ENCODE measurements at regions of chr14 and their contacts with region 1.

Region 1: DNA sequence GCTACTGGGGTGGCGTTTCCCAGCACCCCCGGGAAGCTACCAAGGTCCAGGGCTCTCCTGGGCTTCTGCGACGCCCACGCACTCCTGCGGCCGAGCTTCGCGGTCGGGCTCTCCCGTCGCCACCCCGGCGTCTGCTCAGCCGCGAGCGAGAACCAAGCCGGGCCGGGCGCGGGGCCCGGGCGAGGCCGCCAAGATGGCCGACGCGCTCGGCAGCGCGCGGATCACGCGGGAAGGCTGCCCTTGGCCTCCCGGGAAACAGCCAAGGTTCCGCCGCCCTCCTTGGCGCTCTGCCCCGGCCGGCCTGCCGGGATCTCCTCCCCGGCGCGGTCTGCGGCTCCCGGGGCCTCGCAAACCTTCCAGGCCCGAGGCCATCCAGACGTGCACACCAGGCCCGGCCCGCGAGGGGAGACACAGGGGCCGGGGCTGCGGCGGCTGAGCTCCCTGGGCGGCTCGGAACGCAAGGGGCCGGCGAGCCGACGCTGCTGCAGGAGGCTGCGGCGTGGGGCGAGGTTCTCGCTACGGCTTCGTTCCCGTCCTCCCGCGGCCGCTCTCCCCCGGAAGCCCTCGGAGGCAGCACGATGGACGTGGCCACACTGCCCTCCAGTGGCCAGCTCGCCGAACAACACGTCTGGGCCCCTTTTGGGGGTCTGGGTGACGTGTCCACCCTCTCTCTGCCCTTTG is 23.5 kb upstream of the ZFP36L1 start:
- DNase-seq: peak; percentile 82 to 97 (median 91)
- ATAC-seq: peak; percentile 76
- H3K4me3 ChIP-seq: peak overlapping the region; percentile 59 to 69
- H3K4me3 Mint-ChIP-seq: peak overlapping the region; percentile 79
- H3K27ac ChIP-seq: peak overlapping the region; percentile 77 to 91
- H3K27ac Mint-ChIP-seq: peak overlapping the region; percentile 98
- H3K4me1 ChIP-seq: peaks cover 66% of the 10 kb centered on the region
- H3K4me1 Mint-ChIP-seq: peaks cover 68% of the 10 kb centered on the region
- H3K27me3 ChIP-seq: no peaks in the 10 kb centered on the region
- H3K27me3 Mint-ChIP-seq: no peaks in the 10 kb centered on the region
- CTCF ChIP-seq: peak; percentile 95

Region 2: DNA sequence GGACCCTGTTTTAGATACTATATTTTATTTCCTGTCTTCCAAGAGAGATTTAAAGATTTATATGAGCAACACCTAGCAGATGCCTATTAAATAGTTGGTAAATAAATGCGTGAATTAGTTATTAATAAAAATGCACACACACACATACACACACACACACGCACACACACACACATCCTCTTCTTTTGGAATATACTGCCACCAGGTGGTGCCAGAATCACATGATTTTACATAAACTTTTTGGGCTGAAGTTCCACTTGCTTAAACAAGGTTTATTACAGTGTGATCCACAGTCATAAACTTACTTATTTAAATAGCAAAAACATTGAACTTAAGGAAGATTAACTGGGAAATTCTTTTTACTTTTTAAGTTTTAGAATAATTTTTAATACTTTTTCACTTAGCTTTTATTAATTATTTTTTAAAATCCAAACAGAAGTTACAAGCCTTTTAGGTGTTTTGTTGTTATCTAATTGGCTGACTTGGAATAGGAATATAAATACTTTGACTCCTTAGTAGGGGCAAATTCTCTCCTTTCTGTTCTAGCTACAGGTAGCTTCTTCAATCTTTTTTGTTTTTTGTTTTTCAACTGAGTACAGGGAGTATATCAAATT is 979.3 kb before region 1 on chr14:
- CTCF ChIA-PET with region 1: interaction called, 9 read pairs
- POLR2A ChIA-PET with region 1: interaction called, 3 read pairs
- intact Hi-C with region 1: loop called (anchors 1 kb)
- DNase-seq: peak in 7 of 9 experiments; percentile 41 to 85 (median 60)
- ATAC-seq: peak; percentile 62
- H3K4me3 ChIP-seq: no peak overlapping the region
- H3K4me3 Mint-ChIP-seq: no peak overlapping the region
- H3K27ac ChIP-seq: no peak overlapping the region
- H3K27ac Mint-ChIP-seq: no peak overlapping the region
- H3K4me1 ChIP-seq: no peaks in the 10 kb centered on the region
- H3K4me1 Mint-ChIP-seq: peaks cover 5% of the 10 kb centered on the region
- H3K27me3 ChIP-seq: no peaks in the 10 kb centered on the region
- H3K27me3 Mint-ChIP-seq: no peaks in the 10 kb centered on the region
- CTCF ChIP-seq: peak; percentile 69

Region 3: DNA sequence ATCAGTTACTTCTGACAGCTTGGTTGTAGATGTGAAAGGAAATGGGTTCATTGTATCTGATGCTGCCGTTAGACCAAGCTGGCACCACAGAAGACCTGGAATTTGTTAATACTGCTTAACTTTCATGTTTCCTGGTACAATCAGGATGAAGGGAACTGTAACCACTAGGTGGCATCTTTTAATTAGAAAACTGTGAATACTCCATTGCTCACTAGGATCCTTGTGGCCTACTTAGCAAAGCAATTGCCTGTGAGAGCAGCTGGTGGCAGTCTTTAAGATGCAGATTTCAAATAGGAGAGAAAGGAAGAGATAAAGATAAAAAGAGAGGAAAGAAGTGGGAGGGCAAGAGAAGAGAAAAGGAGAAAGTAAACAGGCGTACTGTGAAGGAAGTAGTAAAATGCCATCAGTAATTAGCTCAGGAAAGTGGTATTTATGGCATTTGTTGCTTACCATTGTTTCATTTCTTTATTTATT is 882.4 kb before region 1 on chr14:
- CTCF ChIA-PET with region 1: interaction called, 40 read pairs
- POLR2A ChIA-PET with region 1: interaction called, 4 read pairs
- intact Hi-C with region 1: loop called in 1 of 2 experiments (anchors 1 kb)
- DNase-seq: peak in 2 of 9 experiments; percentile 48 to 67
- ATAC-seq: peak; percentile 57
- H3K4me3 ChIP-seq: no peak overlapping the region
- H3K4me3 Mint-ChIP-seq: no peak overlapping the region
- H3K27ac ChIP-seq: no peak overlapping the region
- H3K27ac Mint-ChIP-seq: no peak overlapping the region
- H3K4me1 ChIP-seq: peaks cover 5% of the 10 kb centered on the region
- H3K4me1 Mint-ChIP-seq: peaks cover 7% of the 10 kb centered on the region
- H3K27me3 ChIP-seq: no peaks in the 10 kb centered on the region
- H3K27me3 Mint-ChIP-seq: no peaks in the 10 kb centered on the region
- CTCF ChIP-seq: peak; percentile 63

Region 4: GRCh38 chr14:68283378-68284123 is 532.9 kb before region 1 on chr14:
- CTCF ChIA-PET with region 1: interaction called, 7 read pairs
- POLR2A ChIA-PET with region 1: interaction called, 19 read pairs
- intact Hi-C with region 1: no loop called
- DNase-seq: peak; percentile 32 to 87 (median 72)
- ATAC-seq: peak; percentile 69
- H3K4me3 ChIP-seq: peak overlapping the region in 1 of 2 experiments; percentile 6
- H3K4me3 Mint-ChIP-seq: peak overlapping the region; percentile 62
- H3K27ac ChIP-seq: peak overlapping the region; percentile 57 to 89
- H3K27ac Mint-ChIP-seq: peak overlapping the region; percentile 98
- H3K4me1 ChIP-seq: peaks cover 71% of the 10 kb centered on the region
- H3K4me1 Mint-ChIP-seq: peaks cover 85% of the 10 kb centered on the region
- H3K27me3 ChIP-seq: no peaks in the 10 kb centered on the region
- H3K27me3 Mint-ChIP-seq: no peaks in the 10 kb centered on the region
- CTCF ChIP-seq: no peak

Region 5: GRCh38 chr14:68408680-68409079 is 407.7 kb before region 1 on chr14:
- CTCF ChIA-PET with region 1: interaction called, 15 read pairs
- POLR2A ChIA-PET with region 1: interaction called, 5 read pairs
- intact Hi-C with region 1: no loop called
- DNase-seq: peak in 2 of 9 experiments; percentile 41 to 64
- ATAC-seq: peak; percentile 49
- H3K4me3 ChIP-seq: no peak overlapping the region
- H3K4me3 Mint-ChIP-seq: no peak overlapping the region
- H3K27ac ChIP-seq: no peak overlapping the region
- H3K27ac Mint-ChIP-seq: peak overlapping the region; percentile 4
- H3K4me1 ChIP-seq: peaks cover 25% of the 10 kb centered on the region
- H3K4me1 Mint-ChIP-seq: peaks cover 38% of the 10 kb centered on the region
- H3K27me3 ChIP-seq: no peaks in the 10 kb centered on the region
- H3K27me3 Mint-ChIP-seq: no peaks in the 10 kb centered on the region
- CTCF ChIP-seq: no peak

Region 6: DNA sequence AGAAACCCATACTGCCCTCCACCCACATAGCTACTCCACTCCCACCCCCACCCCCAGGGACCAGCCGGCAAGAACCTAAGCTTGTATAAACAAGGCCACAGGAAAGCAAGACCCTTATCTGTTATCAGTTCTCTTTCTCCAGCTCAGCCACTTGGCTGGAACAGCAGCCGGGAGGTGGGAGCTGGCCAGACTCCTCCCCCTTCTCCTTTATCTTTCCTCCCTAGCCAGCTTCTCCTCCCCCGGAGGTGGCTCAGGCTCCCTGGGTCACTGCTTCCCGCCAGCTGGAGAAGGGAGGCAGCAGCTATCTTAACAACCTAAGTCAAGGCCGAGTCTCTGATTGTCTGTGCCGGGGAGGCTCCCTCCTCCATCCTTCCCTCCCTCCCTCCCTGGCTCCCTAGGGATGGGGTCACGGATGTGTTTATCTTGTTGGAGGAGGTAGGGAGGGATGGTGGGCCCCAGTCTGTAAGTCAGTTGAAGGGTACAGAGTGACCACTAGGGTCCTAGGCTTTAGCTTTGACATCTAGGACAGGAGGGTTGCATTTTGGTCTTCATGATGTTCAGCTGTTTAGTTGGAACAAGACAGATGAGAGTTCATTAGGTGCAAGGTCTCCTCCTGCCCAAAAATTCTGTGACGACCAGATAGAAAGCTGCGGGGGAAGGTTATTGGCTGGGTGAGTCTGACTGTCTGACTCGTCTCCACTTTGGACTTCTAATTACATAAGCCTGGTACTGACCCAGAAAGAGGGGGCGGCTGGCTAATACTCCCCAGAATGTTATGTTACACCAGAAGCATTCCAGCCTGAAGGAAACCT is 53.2 kb before region 1 on chr14:
- CTCF ChIA-PET with region 1: no interaction called
- POLR2A ChIA-PET with region 1: no interaction called
- intact Hi-C with region 1: no loop called
- DNase-seq: no peak
- ATAC-seq: no peak
- H3K4me3 ChIP-seq: no peak overlapping the region
- H3K4me3 Mint-ChIP-seq: no peak overlapping the region
- H3K27ac ChIP-seq: no peak overlapping the region
- H3K27ac Mint-ChIP-seq: no peak overlapping the region
- H3K4me1 ChIP-seq: peaks cover 3% of the 10 kb centered on the region
- H3K4me1 Mint-ChIP-seq: peaks cover 20% of the 10 kb centered on the region
- H3K27me3 ChIP-seq: no peaks in the 10 kb centered on the region
- H3K27me3 Mint-ChIP-seq: no peaks in the 10 kb centered on the region
- CTCF ChIP-seq: no peak

Region 7: DNA sequence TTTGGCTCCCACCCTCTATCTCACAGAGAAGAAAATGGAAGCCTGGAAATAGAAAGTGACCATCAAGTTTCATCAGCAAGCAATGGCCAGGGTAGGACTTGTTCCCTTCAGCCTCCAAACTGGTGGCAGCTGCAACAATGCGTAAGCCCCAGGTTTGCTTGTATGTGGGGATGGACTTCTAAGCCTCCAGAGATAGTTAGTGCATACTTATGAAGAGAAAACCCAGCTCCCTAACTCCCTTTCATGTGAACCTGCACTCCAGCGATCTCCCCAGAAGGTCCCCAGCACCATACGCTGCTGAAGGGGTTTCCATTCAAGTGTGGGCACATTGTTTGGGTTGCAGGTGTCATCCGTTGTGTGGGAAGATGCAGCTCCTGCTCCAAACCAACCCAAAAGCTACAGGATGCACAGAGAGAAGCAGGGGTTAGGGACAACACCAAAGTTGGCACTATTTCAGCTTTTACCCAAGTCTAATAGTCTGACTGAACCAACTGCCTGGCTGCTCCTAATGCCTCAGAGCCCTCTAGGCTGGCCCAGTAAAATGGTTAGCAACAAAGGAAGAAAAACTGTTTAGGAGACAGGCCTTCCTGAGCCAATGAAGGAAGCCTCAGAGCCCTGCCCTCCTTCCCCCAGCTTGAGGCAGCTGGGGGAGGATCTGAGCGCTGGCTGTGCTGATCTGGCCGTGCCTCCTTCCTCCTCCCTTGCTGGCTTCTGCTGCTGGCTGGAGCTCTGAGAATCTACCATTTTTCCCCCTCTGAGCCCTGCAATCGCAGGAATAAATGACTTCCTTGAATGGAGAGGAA is 35.8 kb before region 1 on chr14:
- CTCF ChIA-PET with region 1: interaction called, 384 read pairs
- POLR2A ChIA-PET with region 1: interaction called, 641 read pairs
- intact Hi-C with region 1: no loop called
- DNase-seq: peak in 5 of 9 experiments; percentile 36 to 72 (median 58)
- ATAC-seq: peak; percentile 11
- H3K4me3 ChIP-seq: peak overlapping the region; percentile 29 to 41
- H3K4me3 Mint-ChIP-seq: peak overlapping the region; percentile 83
- H3K27ac ChIP-seq: peak overlapping the region; percentile 47 to 86
- H3K27ac Mint-ChIP-seq: peak overlapping the region; percentile 96
- H3K4me1 ChIP-seq: peaks cover 82% of the 10 kb centered on the region
- H3K4me1 Mint-ChIP-seq: peaks cover 84% of the 10 kb centered on the region
- H3K27me3 ChIP-seq: no peaks in the 10 kb centered on the region
- H3K27me3 Mint-ChIP-seq: no peaks in the 10 kb centered on the region
- CTCF ChIP-seq: no peak

Region 8: DNA sequence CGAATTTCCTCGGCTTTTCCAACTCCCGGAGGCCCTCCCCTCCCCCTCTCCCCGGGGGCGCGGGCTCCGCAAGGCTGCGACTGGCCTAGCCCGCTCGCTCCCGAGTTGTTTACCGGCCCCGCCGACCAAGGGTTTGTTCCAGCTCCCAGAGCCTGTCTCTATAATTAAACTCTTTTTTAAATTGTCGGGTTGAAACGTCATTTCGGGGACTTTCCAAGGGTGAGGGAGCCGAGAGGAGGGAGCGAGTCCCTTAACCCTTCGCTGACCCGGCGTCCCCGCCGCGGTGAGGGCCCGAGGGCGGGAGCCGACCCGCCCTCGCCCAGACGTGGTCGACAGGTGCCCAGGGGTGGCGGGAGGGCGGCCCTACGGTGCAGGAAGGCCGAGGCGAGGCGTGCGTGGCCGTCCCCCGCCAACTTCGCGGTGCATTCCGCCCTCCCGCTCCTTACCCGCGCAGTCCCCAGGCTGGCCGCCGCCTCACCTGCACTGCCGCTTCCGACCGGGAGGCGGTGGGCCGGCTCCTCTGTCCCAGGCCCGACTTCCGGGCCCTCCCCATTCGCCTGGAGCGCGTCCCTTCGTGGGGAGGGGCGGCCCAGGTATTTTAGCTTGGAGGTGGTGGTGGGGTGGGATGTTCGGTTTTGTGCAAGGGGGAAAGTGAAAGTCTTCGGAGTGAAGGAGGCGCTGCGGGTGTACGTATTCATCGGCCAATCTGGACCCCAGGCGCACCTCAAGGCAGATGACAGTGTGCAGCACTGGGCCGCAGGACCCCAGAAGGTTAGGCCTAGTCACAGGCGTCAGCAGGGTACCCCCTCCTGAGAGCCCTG is 20.6 kb before region 1 on chr14:
- CTCF ChIA-PET with region 1: interaction called, 384 read pairs
- POLR2A ChIA-PET with region 1: interaction called, 641 read pairs
- intact Hi-C with region 1: loop called (anchors 1 kb)
- DNase-seq: peak; percentile 60 to 94 (median 82)
- ATAC-seq: peak; percentile 41
- H3K4me3 ChIP-seq: peak overlapping the region; percentile 94 to 97
- H3K4me3 Mint-ChIP-seq: peak overlapping the region; percentile 92
- H3K27ac ChIP-seq: peak overlapping the region; percentile 99 to 100
- H3K27ac Mint-ChIP-seq: peak overlapping the region; percentile 100
- H3K4me1 ChIP-seq: peaks cover 18% of the 10 kb centered on the region
- H3K4me1 Mint-ChIP-seq: peaks cover 37% of the 10 kb centered on the region
- H3K27me3 ChIP-seq: no peaks in the 10 kb centered on the region
- H3K27me3 Mint-ChIP-seq: no peaks in the 10 kb centered on the region
- CTCF ChIP-seq: peak; percentile 71